ENCODE measurements at regions of chr3 and their contacts with region 1.

Region 1: DNA sequence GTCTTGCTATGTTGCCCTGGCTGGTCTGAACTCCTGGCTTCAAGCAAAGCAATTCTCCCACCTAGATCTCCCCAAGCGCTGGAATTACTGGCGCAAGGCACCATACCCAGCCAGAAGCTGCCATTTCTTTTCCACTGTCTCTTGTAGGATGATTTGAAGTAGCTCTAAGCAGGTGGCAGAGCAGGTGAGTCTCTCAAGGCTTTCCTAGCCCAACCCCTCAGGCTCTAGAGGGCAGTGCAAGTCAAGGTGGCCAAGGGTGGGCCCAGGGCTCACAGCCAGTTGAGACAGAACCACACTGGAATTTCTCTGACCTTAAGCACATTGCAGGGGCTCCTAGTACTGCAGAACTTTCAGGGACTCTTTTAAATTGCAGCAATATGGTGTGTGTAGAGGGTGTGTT is 15.6 kb upstream of the DAG1 start:
- DNase-seq: no peak
- H3K4me3 ChIP-seq: no peak overlapping the region
- H3K27ac ChIP-seq: no peak overlapping the region
- H3K4me1 ChIP-seq: no peaks in the 10 kb centered on the region
- H3K27me3 ChIP-seq: no peaks in the 10 kb centered on the region
- CTCF ChIP-seq: no peak
- POLR2A ChIP-seq: no peak

Region 2: GRCh38 chr3:48151058-48151806 is 1303.2 kb before region 1 on chr3:
- CTCF ChIA-PET with region 1: no interaction called
- POLR2A ChIA-PET with region 1: no interaction called
- dilution Hi-C with region 1: no loop called
- intact Hi-C with region 1: no loop called
- DNase-seq: peak; percentile 88
- H3K4me3 ChIP-seq: no peak overlapping the region
- H3K27ac ChIP-seq: peak overlapping the region; percentile 18
- H3K4me1 ChIP-seq: peaks cover 10% of the 10 kb centered on the region
- H3K27me3 ChIP-seq: no peaks in the 10 kb centered on the region
- CTCF ChIP-seq: peak; percentile 83 to 87
- POLR2A ChIP-seq: no peak

Region 3: DNA sequence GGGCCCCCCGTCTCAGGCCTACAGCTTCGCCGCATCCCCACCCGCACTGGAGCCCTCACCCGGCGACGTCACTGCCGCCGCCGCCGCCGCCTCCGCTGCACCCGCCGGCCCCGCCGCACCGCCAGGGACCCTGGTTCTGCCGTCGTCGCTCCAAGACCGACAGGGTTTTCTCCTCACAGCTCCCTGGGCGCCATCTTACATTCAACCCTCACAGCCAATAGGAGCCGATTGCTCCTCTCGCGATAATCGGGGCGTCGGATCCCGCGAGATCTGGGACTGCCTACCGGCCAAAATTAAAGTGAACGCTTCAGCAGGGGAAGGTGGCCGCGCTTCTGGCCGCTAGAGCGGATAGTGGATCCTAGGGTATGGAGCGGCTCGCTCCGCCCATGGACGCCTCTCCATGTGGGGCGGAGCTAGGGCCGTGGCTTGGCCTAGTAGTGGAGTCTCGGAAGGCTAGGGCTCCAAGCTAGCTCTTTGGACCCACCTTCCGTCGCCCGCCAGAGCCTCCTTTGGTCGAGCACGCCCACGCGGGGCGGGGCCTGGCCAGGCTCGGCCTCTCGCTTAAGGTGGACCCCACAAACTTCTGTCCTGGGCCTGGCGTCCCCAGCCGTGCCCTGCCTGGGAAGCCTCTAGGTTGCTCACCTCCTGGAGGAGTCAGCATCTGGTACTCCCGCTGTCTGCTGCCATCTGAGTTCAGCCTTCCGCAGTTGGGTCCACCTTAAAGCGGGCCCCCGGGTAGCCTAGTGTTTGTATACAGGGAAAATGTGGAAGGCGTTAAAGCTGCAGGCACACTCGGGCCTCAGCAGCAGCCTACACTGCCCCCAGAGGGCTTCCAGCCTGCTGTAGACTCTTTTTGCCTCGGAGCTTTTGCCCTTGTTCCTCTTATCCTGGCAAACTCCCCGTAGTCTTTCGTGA is 360.3 kb before region 1 on chr3 and contains the start of gene QRICH1:
- CTCF ChIA-PET with region 1: interaction called, 21 read pairs
- POLR2A ChIA-PET with region 1: no interaction called
- dilution Hi-C with region 1: no loop called
- intact Hi-C with region 1: no loop called
- DNase-seq: peak; percentile 99
- H3K4me3 ChIP-seq: peak within 1 kb of the TSS; percentile 79 to 100 (median 80)
- H3K27ac ChIP-seq: peak within 1 kb of the TSS; percentile 93
- H3K4me1 ChIP-seq: peaks cover 13% of the 10 kb centered on the region
- H3K27me3 ChIP-seq: no peaks in the 10 kb centered on the region
- CTCF ChIP-seq: peak; percentile 64 to 82
- POLR2A ChIP-seq: peak; percentile 13
- total RNA-seq, gene QRICH1: 106 and 116 TPM in 2 replicates

Region 4: GRCh38 chr3:49171119-49171774 is 283.2 kb before region 1 on chr3 and contains the start of gene KLHDC8B:
- CTCF ChIA-PET with region 1: interaction called, 87 read pairs
- POLR2A ChIA-PET with region 1: no interaction called
- dilution Hi-C with region 1: no loop called
- intact Hi-C with region 1: loop called (anchors 1 kb)
- DNase-seq: peak; percentile 95
- H3K4me3 ChIP-seq: peak within 1 kb of the TSS; percentile 44 to 94 (median 71)
- H3K27ac ChIP-seq: peak within 1 kb of the TSS; percentile 24
- H3K4me1 ChIP-seq: peaks cover 25% of the 10 kb centered on the region
- H3K27me3 ChIP-seq: no peaks in the 10 kb centered on the region
- CTCF ChIP-seq: peak; percentile 93 to 99
- POLR2A ChIP-seq: peak; percentile 69
- total RNA-seq, gene KLHDC8B: 22.9 and 36.0 TPM in 2 replicates

Region 5: DNA sequence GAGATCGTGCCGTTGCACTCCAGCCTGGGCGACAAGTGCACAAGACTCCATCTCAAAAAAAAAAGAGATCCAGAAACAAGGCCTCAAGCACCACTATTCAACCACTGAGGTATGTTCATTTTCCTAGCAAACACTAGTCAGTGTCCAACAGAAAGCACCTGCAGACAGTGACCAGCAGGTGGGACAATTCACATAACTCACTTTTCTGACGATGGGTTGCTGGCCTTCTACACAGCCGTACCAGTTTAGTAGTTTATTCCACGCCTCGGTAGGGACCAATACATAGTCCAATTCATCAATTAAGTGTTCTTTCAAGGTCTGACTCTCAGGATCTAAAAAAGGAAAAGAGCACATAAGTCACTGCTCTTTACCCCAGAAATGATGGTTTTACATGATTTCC is 127.0 kb before region 1 on chr3:
- CTCF ChIA-PET with region 1: interaction called, 18 read pairs
- POLR2A ChIA-PET with region 1: no interaction called
- dilution Hi-C with region 1: no loop called
- intact Hi-C with region 1: loop called (anchors 1 kb)
- DNase-seq: peak; percentile 7
- H3K4me3 ChIP-seq: no peak overlapping the region
- H3K27ac ChIP-seq: no peak overlapping the region
- H3K4me1 ChIP-seq: no peaks in the 10 kb centered on the region
- H3K27me3 ChIP-seq: no peaks in the 10 kb centered on the region
- CTCF ChIP-seq: peak in 1 of 2 donors; percentile 14
- POLR2A ChIP-seq: no peak

Region 6: DNA sequence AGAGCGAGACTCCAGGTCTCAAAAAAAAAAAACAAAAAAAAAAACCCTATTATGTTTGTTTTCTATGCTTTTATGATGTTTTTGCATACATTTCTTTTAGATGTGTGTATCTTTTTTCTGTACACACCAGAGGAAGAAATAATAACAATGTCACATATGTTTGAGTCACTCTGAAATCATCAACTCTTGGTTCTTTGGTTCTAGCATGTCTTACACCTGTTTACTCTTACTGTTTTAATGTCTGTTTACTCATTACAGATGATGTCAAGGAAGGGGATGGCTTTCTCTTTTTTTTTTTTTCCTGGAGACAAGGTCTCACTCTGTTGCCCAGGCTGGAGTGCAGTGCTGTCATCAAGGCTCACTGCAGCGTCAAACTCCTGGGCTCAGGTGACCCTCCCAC is 66.7 kb before region 1 on chr3:
- CTCF ChIA-PET with region 1: interaction called, 14 read pairs
- POLR2A ChIA-PET with region 1: no interaction called
- dilution Hi-C with region 1: no loop called
- intact Hi-C with region 1: no loop called
- DNase-seq: no peak
- H3K4me3 ChIP-seq: no peak overlapping the region
- H3K27ac ChIP-seq: no peak overlapping the region
- H3K4me1 ChIP-seq: peaks cover 8% of the 10 kb centered on the region
- H3K27me3 ChIP-seq: no peaks in the 10 kb centered on the region
- CTCF ChIP-seq: no peak
- POLR2A ChIP-seq: no peak

Region 7: GRCh38 chr3:49428697-49429100 is 25.8 kb before region 1 on chr3:
- CTCF ChIA-PET with region 1: interaction called, 13 read pairs
- POLR2A ChIA-PET with region 1: no interaction called
- dilution Hi-C with region 1: no loop called
- intact Hi-C with region 1: no loop called
- DNase-seq: no peak
- H3K4me3 ChIP-seq: peak overlapping the region in 2 of 3 experiments; percentile 75 to 92
- H3K27ac ChIP-seq: no peak overlapping the region
- H3K4me1 ChIP-seq: peaks cover 3% of the 10 kb centered on the region
- H3K27me3 ChIP-seq: no peaks in the 10 kb centered on the region
- CTCF ChIP-seq: no peak
- POLR2A ChIP-seq: no peak

Measured in endothelial cell of umbilical vein (primary cell).